HEK293 (cell line): ENCODE measurements at regions of chr19 and their contacts with region 1.

Region 1: GRCh38 chr19:42113641-42114348 is 18.5 kb downstream of the POU2F2 start:
- H3K4me3 ChIP-seq: no peak overlapping the region
- H3K27ac ChIP-seq: 0 out of 2 replicates have a peak overlapping the region, but pooled peaks have one; percentile 5
- H3K4me1 ChIP-seq: peaks cover 9% of the 10 kb centered on the region; the same call in 1 of the 2 replicates
- CTCF ChIP-seq: peak; percentile 40; the same call in 1 of the 2 replicates

Region 2: GRCh38 chr19:42098781-42099180 is 15.0 kb before region 1 on chr19:
- CTCF ChIA-PET with region 1: interaction called, 39 read pairs
- POLR2A ChIA-PET with region 1: interaction called, 3 read pairs
- H3K4me3 ChIP-seq: no peak overlapping the region
- H3K27ac ChIP-seq: no peak overlapping the region
- H3K4me1 ChIP-seq: no peaks in the 10 kb centered on the region
- CTCF ChIP-seq: no peak

Region 3: DNA sequence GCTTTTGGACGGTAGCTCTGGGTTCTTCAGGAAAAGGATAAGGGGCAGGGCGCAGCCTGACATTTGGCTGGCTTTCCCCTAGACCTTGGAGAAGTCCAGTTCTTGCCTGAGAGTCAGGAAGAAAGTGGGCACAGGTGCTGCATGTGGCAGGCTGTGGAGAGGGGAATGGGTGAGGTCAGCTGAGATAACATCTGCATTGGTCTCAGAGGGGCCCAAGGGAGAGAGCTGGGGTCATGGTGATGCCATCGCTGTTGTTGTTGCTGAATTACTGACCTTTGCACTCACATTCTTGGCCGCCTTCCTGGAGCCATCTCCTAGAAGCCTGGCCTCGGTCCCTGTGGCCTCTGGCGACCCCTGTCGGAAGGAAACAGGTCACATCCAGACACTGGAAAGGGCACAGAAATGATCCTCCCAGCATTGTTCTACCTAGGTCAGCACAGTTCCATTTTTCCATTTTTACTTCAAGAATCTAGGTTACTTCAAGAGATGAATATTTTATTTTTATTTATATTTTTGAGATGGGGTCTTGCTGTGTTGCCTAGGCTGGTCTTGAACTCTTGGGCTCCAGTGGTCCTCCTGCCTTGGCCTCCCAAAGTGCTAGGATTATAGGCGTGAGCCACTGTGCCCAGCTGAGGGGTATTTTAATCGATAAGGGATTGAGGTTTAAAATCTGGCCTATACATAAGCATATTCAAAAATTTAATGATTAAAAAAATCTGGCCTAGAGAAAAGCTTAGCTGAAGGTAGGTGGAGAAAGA is 319.9 kb after region 1 on chr19:
- CTCF ChIA-PET with region 1: interaction called, 33 read pairs
- POLR2A ChIA-PET with region 1: no interaction called
- H3K4me3 ChIP-seq: no peak overlapping the region
- H3K27ac ChIP-seq: no peak overlapping the region
- H3K4me1 ChIP-seq: peaks cover 5% of the 10 kb centered on the region; the same call in 1 of the 2 replicates
- CTCF ChIP-seq: peak; percentile 53; the same call in 1 of the 2 replicates